ENCODE measurements at regions of chr14 and their contacts with region 1.

Region 1: DNA sequence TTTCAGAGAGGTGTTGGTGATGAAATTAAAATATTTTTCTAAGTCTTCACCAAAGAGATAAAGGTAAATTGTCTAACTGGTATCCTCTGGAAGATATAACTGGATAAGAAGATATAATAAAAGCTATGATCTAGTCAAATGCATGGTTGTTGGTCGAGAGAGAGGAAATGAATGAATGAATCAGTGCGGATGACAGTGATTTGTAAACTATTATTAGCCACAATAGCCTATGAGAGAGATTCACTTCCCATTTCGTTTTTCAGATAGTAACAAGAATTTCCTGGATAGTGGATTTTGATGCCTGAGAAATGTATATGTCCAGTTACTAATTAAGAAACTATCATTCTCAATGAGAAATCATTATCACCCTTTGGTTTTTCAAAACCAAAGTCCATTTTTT is 63.1 kb downstream of the HEATR5A start:
- H3K4me3 Mint-ChIP-seq: no peak overlapping the region
- H3K27ac Mint-ChIP-seq: no peak overlapping the region
- H3K4me1 Mint-ChIP-seq: peaks cover 6% of the 10 kb centered on the region
- H3K27me3 Mint-ChIP-seq: no peaks in the 10 kb centered on the region

Region 2: DNA sequence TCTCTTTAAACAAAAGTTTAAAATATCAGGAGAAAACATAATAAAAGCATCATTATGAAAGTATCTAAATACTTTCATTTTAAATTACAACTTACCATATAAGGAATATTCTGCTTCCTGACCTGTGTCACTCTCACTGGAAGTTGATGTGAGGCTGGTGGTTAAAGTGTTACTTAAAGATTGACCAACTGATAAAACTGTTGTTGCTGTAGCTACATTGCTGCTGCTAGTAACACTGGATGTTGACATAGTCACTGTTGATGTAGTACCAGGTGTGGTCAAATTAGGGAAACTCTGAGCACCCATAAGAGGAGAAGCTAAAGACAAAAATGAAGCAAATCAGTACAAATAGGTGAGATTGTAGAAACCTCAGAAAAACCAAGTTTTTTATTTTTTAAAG is 229.6 kb before region 1 on chr14:
- intact Hi-C with region 1: loop called (anchors 10 kb)
- H3K4me3 Mint-ChIP-seq: no peak overlapping the region
- H3K27ac Mint-ChIP-seq: no peak overlapping the region
- H3K4me1 Mint-ChIP-seq: peaks cover 10% of the 10 kb centered on the region
- H3K27me3 Mint-ChIP-seq: no peaks in the 10 kb centered on the region

Region 3: GRCh38 chr14:31159682-31160296 is 197.5 kb before region 1 on chr14:
- intact Hi-C with region 1: loop called (anchors 10 kb)
- H3K4me3 Mint-ChIP-seq: no peak overlapping the region
- H3K27ac Mint-ChIP-seq: no peak overlapping the region
- H3K4me1 Mint-ChIP-seq: no peaks in the 10 kb centered on the region
- H3K27me3 Mint-ChIP-seq: no peaks in the 10 kb centered on the region

Region 4: DNA sequence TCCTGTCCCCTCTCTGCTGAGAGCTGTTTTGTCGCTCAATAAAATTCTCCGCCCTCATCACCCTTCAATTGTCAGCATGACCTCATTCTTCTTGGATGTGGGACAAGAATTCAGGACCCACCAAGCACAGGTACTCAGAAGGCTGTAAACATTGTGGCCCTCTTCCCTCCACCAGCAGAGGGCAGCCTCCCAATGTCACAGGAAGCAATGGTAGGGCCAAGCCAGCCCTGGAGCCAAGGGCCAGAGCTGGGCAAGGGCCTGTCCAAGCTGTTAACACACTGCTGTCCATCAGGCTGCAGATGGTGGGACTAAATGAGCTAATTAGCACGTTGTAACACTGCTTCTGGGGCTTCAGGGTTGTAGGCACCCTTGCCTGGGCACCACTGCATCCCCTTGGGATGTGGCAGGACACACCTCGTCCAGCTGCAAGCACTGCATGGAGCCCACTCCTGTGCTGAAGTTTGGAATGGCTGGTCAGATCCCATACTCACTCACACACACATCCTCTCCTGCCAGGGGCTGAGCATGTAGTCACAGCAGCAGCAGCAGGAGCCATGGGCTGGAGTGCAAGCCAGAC is 87.0 kb before region 1 on chr14:
- intact Hi-C with region 1: loop called (anchors 2 kb)
- H3K4me3 Mint-ChIP-seq: no peak overlapping the region
- H3K27ac Mint-ChIP-seq: no peak overlapping the region
- H3K4me1 Mint-ChIP-seq: peaks cover 21% of the 10 kb centered on the region
- H3K27me3 Mint-ChIP-seq: no peaks in the 10 kb centered on the region

Region 5: GRCh38 chr14:31297701-31298344 is 59.5 kb before region 1 on chr14:
- intact Hi-C with region 1: loop called (anchors 10 kb)
- H3K4me3 Mint-ChIP-seq: no peak overlapping the region
- H3K27ac Mint-ChIP-seq: no peak overlapping the region
- H3K4me1 Mint-ChIP-seq: no peaks in the 10 kb centered on the region
- H3K27me3 Mint-ChIP-seq: no peaks in the 10 kb centered on the region

Measured in dendritic cell treated with granulocyte-macrophage colony-stimulating factor and Interleukin-4, amounts not matched to agents 40 ng/mL and 50 ng/mL, for 4 days (primary cell).